ENCODE measurements at regions of chr11 and their contacts with region 1.

Region 1: GRCh38 chr11:11335043-11335442 is 18.0 kb downstream of the CSNK2A3 start:
- DNase-seq: no peak
- ATAC-seq: peak; percentile 35; the same call in 1 of the 2 replicates
- H3K4me3 Mint-ChIP-seq: no peak overlapping the region
- H3K27ac Mint-ChIP-seq: no peak overlapping the region
- H3K4me1 Mint-ChIP-seq: peaks cover 21% of the 10 kb centered on the region
- H3K27me3 Mint-ChIP-seq: no peaks in the 10 kb centered on the region; the same call in 1 of the 2 replicates
- CTCF ChIP-seq: no peak

Region 2: DNA sequence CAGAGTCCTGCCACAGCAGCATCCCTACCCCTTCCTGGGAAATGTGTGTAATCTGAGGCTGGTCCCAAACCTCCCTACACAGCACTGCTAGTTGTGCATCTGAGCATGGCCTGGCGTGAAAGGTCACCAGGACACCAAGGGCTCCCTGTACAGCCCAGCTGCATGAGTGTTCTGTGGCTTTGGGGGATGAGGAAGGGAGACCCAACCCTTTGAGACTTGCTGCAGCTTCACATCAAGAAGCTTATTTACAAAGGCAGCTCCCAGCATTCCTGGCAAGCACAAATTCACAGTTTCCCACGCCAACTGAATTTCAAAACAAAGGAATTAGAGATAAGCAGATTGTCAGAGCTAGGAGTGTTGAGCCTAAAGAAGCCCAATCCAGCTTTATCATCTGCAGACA is 14.2 kb before region 1 on chr11:
- CTCF ChIA-PET with region 1: interaction called, 11 read pairs
- POLR2A ChIA-PET with region 1: no interaction called
- DNase-seq: no peak
- ATAC-seq: no peak
- H3K4me3 Mint-ChIP-seq: no peak overlapping the region
- H3K27ac Mint-ChIP-seq: no peak overlapping the region
- H3K4me1 Mint-ChIP-seq: no peaks in the 10 kb centered on the region
- H3K27me3 Mint-ChIP-seq: no peaks in the 10 kb centered on the region
- CTCF ChIP-seq: no peak

Measured in WTC11 (cell line).